A549 (cell line): ENCODE measurements at regions of chr10 and their contacts with region 1.

Region 1: GRCh38 chr10:100872034-100872791 is 40.5 kb upstream of the SLF2 start:
- DNase-seq: peak; percentile 63 to 92
- ATAC-seq: peak; percentile 76 to 94; a peak in 5 of 6 replicates
- H3K4me3 ChIP-seq: no peak overlapping the region
- H3K27ac ChIP-seq: 0 out of 6 replicates have a peak overlapping the region, but pooled peaks of 1 of the 2 experiments have one; percentile 20
- H3K4me1 ChIP-seq: peaks cover 17% of the 10 kb centered on the region; the same call in 2 of the 3 replicates
- CTCF ChIP-seq: peak; percentile 75
- EP300 ChIP-seq: no peak
- POLR2A ChIP-seq: no peak
- RAD21 ChIP-seq: peak; percentile 72 to 82

Region 2: DNA sequence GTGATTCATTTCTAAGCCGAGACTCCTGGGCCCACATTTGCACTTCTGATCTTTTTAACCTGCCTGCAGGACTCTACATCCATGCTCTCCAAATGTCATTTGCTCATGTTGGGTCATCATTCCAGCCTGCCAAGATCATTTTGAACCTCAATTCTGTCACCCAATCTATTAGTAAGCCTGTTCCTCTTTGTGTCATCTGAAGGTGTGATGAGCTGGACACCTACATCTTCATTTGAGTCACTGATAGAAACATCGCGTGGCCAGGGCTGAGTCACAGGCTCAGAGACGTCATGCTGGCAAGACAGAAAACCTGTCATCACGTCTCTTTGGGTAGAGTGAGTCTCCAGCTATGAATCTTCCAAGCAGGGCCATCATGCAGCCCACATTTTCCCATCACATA is 24.8 kb before region 1 on chr10:
- CTCF ChIA-PET with region 1: interaction called, 13 read pairs
- POLR2A ChIA-PET with region 1: no interaction called
- DNase-seq: peak; percentile 45 to 58
- ATAC-seq: peak; percentile 59 to 80; a peak in 5 of 6 replicates
- H3K4me3 ChIP-seq: no peak overlapping the region
- H3K27ac ChIP-seq: no peak overlapping the region
- H3K4me1 ChIP-seq: peaks cover 7% of the 10 kb centered on the region; the same call in 1 of the 3 replicates
- CTCF ChIP-seq: no peak
- EP300 ChIP-seq: no peak
- POLR2A ChIP-seq: no peak
- RAD21 ChIP-seq: no peak

Region 3: GRCh38 chr10:100858747-100859483 is 13.3 kb before region 1 on chr10:
- CTCF ChIA-PET with region 1: interaction called, 12 read pairs
- POLR2A ChIA-PET with region 1: no interaction called
- DNase-seq: no peak
- ATAC-seq: no peak
- H3K4me3 ChIP-seq: no peak overlapping the region
- H3K27ac ChIP-seq: no peak overlapping the region
- H3K4me1 ChIP-seq: no peaks in the 10 kb centered on the region
- CTCF ChIP-seq: no peak
- EP300 ChIP-seq: no peak
- POLR2A ChIP-seq: no peak
- RAD21 ChIP-seq: no peak

Region 4: DNA sequence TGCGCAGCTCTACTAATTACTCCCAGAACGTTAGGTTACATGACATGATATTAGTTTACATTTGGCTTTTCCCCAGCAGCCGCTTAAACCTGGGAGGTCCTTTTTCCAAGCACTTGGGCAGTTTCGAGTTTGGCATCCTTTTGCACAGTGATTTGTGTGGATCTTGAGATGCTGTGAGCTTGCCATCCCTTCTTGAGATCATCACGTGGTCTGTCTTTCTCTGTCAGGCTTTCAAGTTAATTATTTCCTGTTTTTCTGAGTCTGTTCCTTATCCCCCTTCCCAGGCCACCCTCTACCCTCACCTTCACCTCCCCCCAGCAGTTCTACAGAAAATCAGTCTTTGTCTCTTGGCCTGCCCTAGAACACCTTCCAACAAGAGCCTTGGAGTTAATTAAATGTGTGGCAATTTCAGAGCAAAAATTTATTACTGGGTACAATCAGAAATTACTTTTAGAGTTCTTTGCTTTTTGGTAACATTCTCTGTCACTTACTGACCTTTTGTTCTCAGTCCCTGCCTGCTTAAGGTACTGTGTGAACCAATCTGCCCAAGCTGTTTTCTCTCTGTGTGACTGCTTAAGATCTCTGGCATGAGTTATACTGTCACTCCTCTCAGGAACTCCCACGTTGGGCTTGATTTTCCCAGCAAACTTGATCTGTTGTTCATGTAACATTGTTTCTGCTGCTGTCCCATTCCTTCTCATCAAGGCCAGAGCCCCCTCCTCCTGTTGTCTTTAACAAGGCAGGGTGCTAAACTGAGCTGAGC is 37.5 kb after region 1 on chr10:
- CTCF ChIA-PET with region 1: no interaction called
- POLR2A ChIA-PET with region 1: no interaction called
- DNase-seq: no peak
- ATAC-seq: no peak
- H3K4me3 ChIP-seq: no peak overlapping the region
- H3K27ac ChIP-seq: 0 out of 6 replicates have a peak overlapping the region, but pooled peaks of 1 of the 2 experiments have one; percentile 17
- H3K4me1 ChIP-seq: peaks cover 22% of the 10 kb centered on the region; the same call in 2 of the 3 replicates
- CTCF ChIP-seq: no peak
- EP300 ChIP-seq: no peak
- POLR2A ChIP-seq: no peak
- RAD21 ChIP-seq: no peak